H1 (cell line): ENCODE measurements at regions of chr5 and their contacts with region 1.

Region 1: GRCh38 chr5:134225618-134226440 is at the start of gene PPP2CA:
- DNase-seq: peak; percentile 99
- H3K4me3 ChIP-seq: peak within 1 kb of the TSS; percentile 91 to 98 (median 96)
- H3K27ac ChIP-seq: peak within 1 kb of the TSS; percentile 100
- H3K4me1 ChIP-seq: peaks cover 0 to 11% (median 3%) of the 10 kb centered on the region in 4 experiments; a peak in 4 of 7 replicates
- H3K27me3 ChIP-seq: no peaks in the 10 kb centered on the region
- CTCF ChIP-seq: no peak
- EP300 ChIP-seq: no peak
- POLR2A ChIP-seq: peak; percentile 63 to 90; a peak in 2 of 3 replicates
- RAD21 ChIP-seq: no peak
- total RNA-seq, gene PPP2CA: 205 and 211 TPM in 2 replicates

Region 2: DNA sequence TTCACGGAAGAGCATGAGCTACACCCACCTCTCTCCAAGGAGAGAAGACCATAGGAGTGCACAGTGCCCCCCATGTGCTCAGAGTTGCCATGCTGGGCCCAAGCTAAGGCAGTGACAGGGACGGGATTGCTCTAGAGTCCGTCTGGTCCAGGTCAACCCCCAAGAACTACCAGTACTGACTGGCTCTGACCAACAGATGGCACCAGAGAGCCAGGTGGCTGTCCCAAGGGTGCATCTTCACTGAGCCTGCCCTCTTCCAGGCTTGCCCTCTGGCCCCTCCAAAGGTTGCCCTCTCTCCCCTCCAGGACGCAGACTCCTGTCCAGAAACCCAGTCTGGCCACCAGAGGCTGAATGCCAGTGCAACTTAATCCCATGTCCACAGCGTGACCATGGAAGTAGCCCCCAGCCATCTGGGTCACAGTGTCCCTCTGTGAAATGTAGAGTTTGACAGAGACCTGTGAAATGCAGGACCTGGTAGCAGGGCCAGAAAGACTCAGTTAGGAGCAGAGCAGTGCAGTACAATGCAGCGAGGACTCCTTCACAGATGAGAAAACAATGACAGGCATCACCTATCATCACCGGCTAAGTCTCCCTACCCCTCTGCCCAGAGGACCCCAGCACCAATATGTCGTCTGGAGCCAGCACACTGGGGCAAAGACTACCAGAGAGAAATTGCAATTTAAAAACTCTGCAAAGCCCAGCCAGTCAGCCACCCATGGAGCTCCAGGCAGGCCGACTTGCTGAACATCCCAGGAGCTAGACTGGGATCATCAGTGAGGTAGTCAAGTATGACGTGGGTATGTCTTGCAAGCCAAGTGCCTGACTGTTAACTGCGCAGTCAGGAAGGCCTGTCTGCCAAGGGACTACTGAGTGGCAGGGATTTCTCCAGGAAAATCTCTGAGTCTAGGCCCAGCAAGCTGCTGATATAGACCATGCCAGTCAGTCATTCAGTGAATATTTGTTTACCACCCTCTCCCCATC is 41.4 kb before region 1 on chr5:
- CTCF ChIA-PET with region 1: interaction called, 6 read pairs
- POLR2A ChIA-PET with region 1: interaction called, 29 read pairs
- DNase-seq: peak; percentile 38 to 90
- H3K4me3 ChIP-seq: no peak overlapping the region
- H3K27ac ChIP-seq: no peak overlapping the region
- H3K4me1 ChIP-seq: no peaks in the 10 kb centered on the region
- H3K27me3 ChIP-seq: no peaks in the 10 kb centered on the region
- CTCF ChIP-seq: peak; percentile 93 to 97 (median 97)
- EP300 ChIP-seq: no peak
- POLR2A ChIP-seq: no peak
- RAD21 ChIP-seq: peak; percentile 92 to 94

Region 3: DNA sequence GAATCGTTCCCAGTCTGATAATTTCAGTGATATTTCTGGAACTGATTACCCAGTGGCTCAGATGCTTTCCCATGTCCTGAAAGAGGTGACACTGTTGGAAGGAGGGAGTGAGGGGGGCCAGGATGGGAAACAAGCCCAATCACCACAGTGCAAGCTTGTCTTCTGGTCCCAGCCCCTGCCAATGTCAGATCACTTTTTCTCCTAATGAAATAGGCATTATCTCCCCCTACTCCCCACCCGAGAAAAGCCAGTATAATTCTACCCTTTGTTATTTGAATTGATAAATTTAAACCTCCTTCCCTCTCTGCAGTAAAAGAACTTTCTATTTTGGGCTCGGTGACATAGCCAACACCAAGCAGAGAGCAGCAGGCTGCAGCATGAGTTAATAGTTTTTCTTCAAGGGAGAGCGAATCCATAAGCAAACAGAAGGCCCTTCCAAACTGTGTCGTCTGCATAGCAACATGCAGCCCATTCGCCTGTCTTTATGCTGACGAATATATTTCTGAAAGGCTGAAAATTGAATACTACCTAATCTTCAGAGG is 14.7 kb after region 1 on chr5:
- CTCF ChIA-PET with region 1: interaction called, 9 read pairs
- POLR2A ChIA-PET with region 1: interaction called, 18 read pairs
- DNase-seq: no peak
- H3K4me3 ChIP-seq: no peak overlapping the region
- H3K27ac ChIP-seq: no peak overlapping the region
- H3K4me1 ChIP-seq: peaks cover 4 to 18% (median 10%) of the 10 kb centered on the region in 4 experiments; a peak in 5 of 7 replicates
- H3K27me3 ChIP-seq: no peaks in the 10 kb centered on the region
- CTCF ChIP-seq: no peak
- EP300 ChIP-seq: no peak
- POLR2A ChIP-seq: no peak
- RAD21 ChIP-seq: no peak

Region 4: GRCh38 chr5:134255418-134256175 is 29.8 kb after region 1 on chr5:
- CTCF ChIA-PET with region 1: no interaction called
- POLR2A ChIA-PET with region 1: interaction called, 35 read pairs
- DNase-seq: no peak
- H3K4me3 ChIP-seq: no peak overlapping the region
- H3K27ac ChIP-seq: no peak overlapping the region
- H3K4me1 ChIP-seq: no peaks in the 10 kb centered on the region
- H3K27me3 ChIP-seq: peaks cover 0 to 2% (median 0%) of the 10 kb centered on the region in 4 experiments; a peak in 2 of 7 replicates
- CTCF ChIP-seq: no peak
- EP300 ChIP-seq: no peak
- POLR2A ChIP-seq: no peak
- RAD21 ChIP-seq: no peak

Region 5: DNA sequence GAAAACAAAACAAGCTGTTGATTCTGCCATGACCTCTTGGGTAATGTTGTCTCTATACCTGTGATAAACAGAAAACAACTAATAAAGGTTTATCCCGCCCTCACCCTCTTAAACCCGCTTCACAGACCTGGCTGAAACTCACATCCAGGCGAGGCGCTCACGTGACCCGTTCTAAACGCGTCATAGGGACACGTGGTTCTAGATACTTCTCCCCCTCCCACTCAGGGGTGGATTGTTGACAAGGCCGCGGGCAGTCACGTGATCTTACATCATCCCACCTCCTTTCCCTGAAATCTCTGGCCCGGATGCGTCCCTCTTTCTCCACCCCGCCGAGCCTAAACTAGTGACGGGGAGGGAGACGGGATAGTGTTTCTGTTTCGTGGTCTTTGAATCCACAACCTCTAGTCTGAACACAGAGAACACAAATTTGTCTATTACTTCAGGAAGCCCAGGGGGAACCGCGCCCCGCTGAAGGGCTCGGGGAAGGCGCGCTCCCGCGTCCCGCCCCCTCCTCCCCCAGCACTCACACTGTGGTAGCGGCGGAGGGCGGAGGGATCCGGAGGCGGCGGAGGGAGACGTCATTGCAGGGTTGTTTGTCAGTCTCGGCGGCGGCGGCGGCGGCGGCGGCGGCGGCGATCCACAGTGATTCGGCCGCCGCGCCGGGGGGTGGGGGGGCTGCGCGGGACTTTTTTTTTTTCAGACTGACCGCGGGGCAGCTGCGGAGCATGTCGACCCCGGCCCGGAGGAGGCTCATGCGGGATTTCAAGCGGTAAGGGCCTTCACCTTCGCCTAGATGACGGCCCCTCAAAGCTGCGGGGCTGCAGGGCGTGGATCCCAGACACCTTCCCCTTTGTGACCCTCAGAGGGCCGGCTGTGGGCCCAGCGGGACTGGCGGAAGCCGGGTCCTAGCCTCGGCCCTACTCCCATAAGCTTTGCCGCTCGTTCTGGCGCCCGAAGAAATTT is 145.3 kb after region 1 on chr5 and contains the start of gene UBE2B:
- CTCF ChIA-PET with region 1: interaction called, 3 read pairs
- POLR2A ChIA-PET with region 1: interaction called, 21 read pairs
- DNase-seq: peak; percentile 92 to 97
- H3K4me3 ChIP-seq: peak within 1 kb of the TSS; percentile 83 to 97 (median 91)
- H3K27ac ChIP-seq: peak within 1 kb of the TSS; percentile 98
- H3K4me1 ChIP-seq: no peaks in the 10 kb centered on the region; a peak in 3 of 7 replicates
- H3K27me3 ChIP-seq: no peaks in the 10 kb centered on the region
- CTCF ChIP-seq: no peak
- EP300 ChIP-seq: peak in 1 of 2 experiments; percentile 99; a peak in 2 of 3 replicates
- POLR2A ChIP-seq: peak; percentile 24 to 68
- RAD21 ChIP-seq: no peak
- total RNA-seq, gene UBE2B: 40.3 and 46.8 TPM in 2 replicates